SK-MEL-5 (cell line): ENCODE measurements at regions of chr11 and their contacts with region 1.

Region 1: GRCh38 chr11:70281156-70281609 is 10.7 kb downstream of the PPFIA1 start:
- DNase-seq: no peak

Region 2: GRCh38 chr11:69918938-69919650 is 362.1 kb before region 1 on chr11:
- in situ Hi-C with region 1: no loop called
- DNase-seq: peak; percentile 92

Region 3: DNA sequence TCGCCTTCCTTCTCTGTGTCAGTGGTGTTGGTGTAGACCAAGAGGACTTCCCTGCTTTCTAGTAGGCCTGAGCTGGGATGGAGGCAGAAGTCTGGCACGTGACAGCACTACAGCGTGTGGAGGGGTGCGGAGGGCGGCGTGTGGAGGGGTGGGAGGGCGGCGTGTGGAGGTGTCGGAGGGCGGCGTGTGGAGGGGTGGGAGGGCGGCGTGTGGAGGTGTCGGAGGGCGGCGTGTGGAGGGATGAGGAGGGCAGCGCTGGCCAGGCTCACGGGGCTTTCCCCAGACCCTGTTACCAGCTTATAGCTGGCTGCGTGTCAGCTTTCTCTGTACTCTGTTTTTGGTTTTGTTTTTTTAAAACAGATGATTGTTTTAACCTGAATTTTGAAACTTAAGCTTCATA is 71.4 kb after region 1 on chr11:
- in situ Hi-C with region 1: loop called (anchors 5 kb)
- DNase-seq: no peak

Region 4: GRCh38 chr11:70517986-70518907 is 237.1 kb after region 1 on chr11:
- in situ Hi-C with region 1: no loop called
- DNase-seq: peak; percentile 97